ENCODE measurements at regions of chr5 and their contacts with region 1.

Region 1: DNA sequence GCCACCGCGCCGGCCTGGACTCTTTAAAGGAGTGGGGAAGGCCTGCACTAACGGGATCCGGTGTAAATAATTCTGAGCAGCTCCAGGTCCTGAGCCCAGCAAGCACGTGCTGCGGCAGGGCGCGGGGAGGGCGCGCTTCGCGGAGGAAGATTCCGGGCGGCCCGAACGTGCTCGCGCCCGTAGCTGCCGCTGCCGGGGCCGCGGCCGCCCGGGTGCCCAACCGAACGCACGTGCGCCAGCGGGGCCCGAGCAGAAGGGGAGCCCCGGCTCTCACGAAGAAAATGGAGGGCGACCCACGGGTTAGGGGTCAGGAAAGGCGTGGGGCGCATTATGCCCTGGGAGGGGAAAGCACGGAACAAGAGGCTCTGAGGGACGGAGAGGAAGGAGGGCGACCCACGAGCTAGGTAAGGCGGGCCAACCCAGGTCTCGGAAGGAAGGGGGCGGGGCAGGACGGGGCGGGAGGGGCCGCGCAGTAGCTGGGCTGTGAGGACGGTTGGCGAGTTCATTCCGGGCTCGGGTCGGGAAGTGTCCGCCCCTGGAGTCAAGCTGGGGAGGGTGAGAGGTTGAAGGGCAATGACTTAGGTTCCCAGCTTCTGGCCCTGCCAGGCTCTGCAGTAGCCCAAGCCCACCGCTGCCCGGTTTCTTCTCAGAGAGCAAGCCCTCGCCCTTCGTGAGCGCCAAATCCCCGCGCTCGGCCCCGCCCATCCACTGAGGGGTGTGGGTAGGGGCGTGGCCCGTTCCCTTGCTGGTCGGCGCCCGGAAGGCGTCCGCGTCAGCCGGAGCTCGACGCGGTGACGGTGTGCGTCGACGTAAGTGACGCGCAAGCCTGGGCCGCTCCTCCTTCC is at the start of gene ZNF131:
- DNase-seq: peak; percentile 98
- H3K4me3 ChIP-seq: peak within 1 kb of the TSS; percentile 77 to 90 (median 86)
- H3K27ac ChIP-seq: peak within 1 kb of the TSS; percentile 97 to 100 (median 98)
- H3K4me1 ChIP-seq: peaks cover 0 to 28% (median 23%) of the 10 kb centered on the region in 4 donors
- H3K27me3 ChIP-seq: no peaks in the 10 kb centered on the region
- CTCF ChIP-seq: no peak
- EP300 ChIP-seq: peak in 1 of 4 donors; percentile 58
- POLR2A ChIP-seq: peak in 1 of 2 donors; percentile 67
- total RNA-seq, gene ZNF131: 21.7 to 35.3 (median 29.2) TPM

Region 2: GRCh38 chr5:41903892-41904799 is 1216.8 kb before region 1 on chr5 and contains the start of gene RIMOC1:
- intact Hi-C with region 1: loop called (anchors 10 kb)
- DNase-seq: peak; percentile 100
- H3K4me3 ChIP-seq: peak within 1 kb of the TSS; percentile 56 to 81 (median 77)
- H3K27ac ChIP-seq: peak within 1 kb of the TSS; percentile 86 to 95 (median 92)
- H3K4me1 ChIP-seq: peaks cover 0 to 47% (median 18%) of the 10 kb centered on the region in 4 donors
- H3K27me3 ChIP-seq: no peaks in the 10 kb centered on the region
- CTCF ChIP-seq: no peak
- EP300 ChIP-seq: peak in 2 of 4 donors; percentile 51 to 65
- POLR2A ChIP-seq: peak; percentile 87 to 90
- total RNA-seq, gene RIMOC1: 14.9 to 19.3 (median 17.9) TPM

Region 3: GRCh38 chr5:42828671-42829070 is 292.3 kb before region 1 on chr5:
- intact Hi-C with region 1: no loop called
- DNase-seq: no peak
- H3K4me3 ChIP-seq: no peak overlapping the region
- H3K27ac ChIP-seq: no peak overlapping the region
- H3K4me1 ChIP-seq: peaks cover 0 to 19% (median 11%) of the 10 kb centered on the region in 4 donors
- H3K27me3 ChIP-seq: no peaks in the 10 kb centered on the region
- CTCF ChIP-seq: no peak
- EP300 ChIP-seq: no peak
- POLR2A ChIP-seq: no peak

Region 4: DNA sequence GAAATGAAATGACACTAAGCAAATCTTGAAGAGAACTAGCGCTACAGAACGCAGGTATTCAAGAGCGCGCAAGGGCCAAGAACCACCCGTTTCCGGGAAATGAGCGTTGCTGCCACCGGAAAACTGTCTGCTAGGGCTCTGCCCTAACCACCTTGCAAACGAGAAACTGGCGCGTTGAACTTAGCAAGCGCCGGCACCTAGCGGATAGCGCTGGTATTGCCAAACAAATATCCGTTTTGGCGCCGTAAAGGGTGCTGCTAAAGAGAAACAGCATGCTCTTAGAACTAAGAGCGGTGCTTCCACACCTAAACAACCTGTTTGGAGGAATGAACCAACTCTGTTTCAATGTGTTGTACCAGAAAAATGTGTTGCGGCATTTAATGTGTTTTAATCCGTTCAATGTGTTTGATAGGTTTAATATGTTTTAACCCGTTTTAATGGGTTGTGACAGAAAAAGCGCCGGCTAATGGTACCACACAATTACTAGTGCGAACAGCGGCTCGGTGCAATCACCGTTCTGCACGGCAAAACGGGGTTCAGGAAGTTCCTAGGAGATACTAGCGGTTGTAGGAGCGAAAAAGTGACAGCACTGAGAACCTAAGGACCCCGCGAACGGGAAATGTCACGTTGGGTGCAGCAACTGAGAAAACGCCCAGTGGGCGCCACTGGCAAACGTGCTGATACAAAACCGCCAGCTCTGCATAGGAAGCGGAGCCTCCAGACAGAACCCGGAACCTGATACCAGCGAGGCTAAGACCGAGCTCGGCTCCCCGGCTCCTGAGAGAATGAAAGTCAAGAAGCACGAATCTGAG is 80.4 kb before region 1 on chr5 and contains the start of gene ANXA2R:
- intact Hi-C with region 1: loop called (anchors 1 kb)
- DNase-seq: peak; percentile 92
- H3K4me3 ChIP-seq: peak within 1 kb of the TSS; percentile 60 to 67 (median 64)
- H3K27ac ChIP-seq: peak within 1 kb of the TSS; percentile 89 to 92 (median 89)
- H3K4me1 ChIP-seq: peaks cover 0 to 47% (median 31%) of the 10 kb centered on the region in 4 donors
- H3K27me3 ChIP-seq: peaks cover 20 to 89% (median 50%) of the 10 kb centered on the region in 3 donors
- CTCF ChIP-seq: peak; percentile 49 to 78 (median 62)
- EP300 ChIP-seq: no peak
- POLR2A ChIP-seq: peak in 1 of 2 donors; percentile 12
- total RNA-seq, gene ANXA2R: 1.8 to 4.4 (median 3.7) TPM

Region 5: GRCh38 chr5:43191740-43192557 is 71.0 kb after region 1 on chr5 and contains the start of gene NIM1K:
- intact Hi-C with region 1: loop called (anchors 5 kb)
- DNase-seq: peak; percentile 87
- H3K4me3 ChIP-seq: peak within 1 kb of the TSS; percentile 36 to 74 (median 59)
- H3K27ac ChIP-seq: peak within 1 kb of the TSS; percentile 58 to 62 (median 60)
- H3K4me1 ChIP-seq: peaks cover 0 to 28% (median 18%) of the 10 kb centered on the region in 4 donors
- H3K27me3 ChIP-seq: no peaks in the 10 kb centered on the region
- CTCF ChIP-seq: no peak
- EP300 ChIP-seq: no peak
- POLR2A ChIP-seq: no peak
- total RNA-seq, gene NIM1K: 0.28 to 3.6 (median 0.83) TPM

Region 6: GRCh38 chr5:43484106-43484849 is 363.3 kb after region 1 on chr5:
- intact Hi-C with region 1: loop called (anchors 5 kb)
- DNase-seq: peak; percentile 91
- H3K4me3 ChIP-seq: peak overlapping the region; percentile 82 to 93 (median 87)
- H3K27ac ChIP-seq: peak overlapping the region; percentile 95 to 97 (median 95)
- H3K4me1 ChIP-seq: peaks cover 0 to 23% (median 19%) of the 10 kb centered on the region in 4 donors
- H3K27me3 ChIP-seq: no peaks in the 10 kb centered on the region
- CTCF ChIP-seq: peak; percentile 24 to 83 (median 78)
- EP300 ChIP-seq: no peak
- POLR2A ChIP-seq: peak in 1 of 2 donors; percentile 9